SK-MEL-5 (cell line): ENCODE measurements at regions of chr20 and their contacts with region 1.

Region 1: DNA sequence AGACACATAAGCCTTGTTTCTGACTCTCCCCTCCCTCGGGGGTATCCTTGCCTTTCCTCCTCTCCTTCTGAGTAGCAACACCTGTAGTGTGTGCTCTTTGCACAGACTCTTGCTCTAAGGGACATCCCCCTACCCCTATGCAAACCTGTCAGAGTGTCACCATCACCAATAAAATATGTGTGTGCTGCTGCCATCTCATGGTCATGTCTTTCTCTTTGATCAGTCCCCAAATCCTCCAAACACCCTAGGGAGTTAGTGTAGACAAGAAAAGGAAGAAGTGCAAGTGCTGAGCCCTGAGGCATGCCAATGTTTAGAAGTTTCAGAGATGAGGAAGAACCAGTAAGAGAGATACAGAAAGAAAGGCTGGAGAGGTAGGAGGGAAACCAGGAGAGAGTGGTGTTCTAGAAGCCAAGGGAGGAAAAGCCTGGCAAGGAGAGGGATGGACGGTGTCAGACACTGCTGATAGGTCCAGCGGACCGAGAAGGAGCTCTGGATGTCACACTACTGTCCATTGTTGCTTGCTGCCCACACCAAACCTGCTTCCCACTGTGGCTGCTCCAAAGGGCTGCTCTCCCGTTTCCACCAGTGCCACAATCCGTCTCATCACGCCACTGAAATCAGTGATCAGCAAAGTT is 16.4 kb downstream of the TRMT6 start:
- DNase-seq: peak; percentile 57

Region 2: GRCh38 chr20:5586720-5587119 is 347.2 kb before region 1 on chr20:
- in situ Hi-C with region 1: loop called (anchors 25 kb)
- DNase-seq: no peak